ENCODE measurements at regions of chr13 and their contacts with region 1.

Region 1: GRCh38 chr13:50843257-50844083 is at the start of gene DLEU7:
- DNase-seq: no peak
- H3K4me3 Mint-ChIP-seq: no peak within 1 kb of the TSS
- H3K27ac Mint-ChIP-seq: no peak within 1 kb of the TSS
- H3K4me1 Mint-ChIP-seq: peaks cover 16% of the 10 kb centered on the region
- H3K27me3 Mint-ChIP-seq: peaks cover 17% of the 10 kb centered on the region
- total RNA-seq, gene DLEU7: not detected

Region 2: GRCh38 chr13:50893211-50893852 is 49.9 kb after region 1 on chr13:
- CTCF ChIA-PET with region 1: interaction called, 10 read pairs
- intact Hi-C with region 1: no loop called
- DNase-seq: peak; percentile 41
- H3K4me3 Mint-ChIP-seq: peak overlapping the region; percentile 36
- H3K27ac Mint-ChIP-seq: peak overlapping the region; percentile 79
- H3K4me1 Mint-ChIP-seq: peaks cover 38% of the 10 kb centered on the region
- H3K27me3 Mint-ChIP-seq: no peaks in the 10 kb centered on the region